Mammary epithelial cell (primary cell): ENCODE measurements at regions of chr9 and their contacts with region 1.

Region 1: GRCh38 chr9:78490231-78490630 is 193.3 kb downstream of the PSAT1 start:
- DNase-seq: no peak
- H3K4me3 ChIP-seq: no peak overlapping the region
- H3K27ac ChIP-seq: no peak overlapping the region
- H3K4me1 ChIP-seq: no peaks in the 10 kb centered on the region
- H3K27me3 ChIP-seq: no peaks in the 10 kb centered on the region
- CTCF ChIP-seq: no peak

Region 2: DNA sequence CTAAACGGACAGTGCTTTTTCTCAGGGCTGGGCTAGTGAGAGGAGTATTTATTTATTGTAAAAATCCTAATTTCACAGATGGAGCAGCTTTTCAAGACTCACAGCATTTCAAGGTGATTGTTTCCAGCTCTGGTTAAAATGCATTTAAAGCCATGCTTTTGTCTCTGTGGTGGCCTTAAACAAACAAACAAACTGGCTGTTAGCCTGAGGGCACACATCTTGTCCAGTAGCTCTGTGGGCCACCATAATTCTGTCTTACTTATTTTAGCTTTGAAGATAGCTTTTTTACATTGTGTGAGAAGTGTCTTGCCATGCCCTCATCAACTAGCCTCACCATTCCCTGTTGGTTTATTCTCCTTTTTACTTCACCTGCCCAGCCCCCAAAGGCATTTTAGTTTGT is 24.9 kb after region 1 on chr9:
- CTCF ChIA-PET with region 1: no interaction called
- dilution Hi-C with region 1: no loop called
- in situ Hi-C with region 1: no loop called
- intact Hi-C with region 1: no loop called
- DNase-seq: no peak
- H3K4me3 ChIP-seq: no peak overlapping the region
- H3K27ac ChIP-seq: no peak overlapping the region
- H3K4me1 ChIP-seq: no peaks in the 10 kb centered on the region
- H3K27me3 ChIP-seq: no peaks in the 10 kb centered on the region
- CTCF ChIP-seq: no peak

Region 3: GRCh38 chr9:78559449-78559885 is 69.2 kb after region 1 on chr9:
- CTCF ChIA-PET with region 1: interaction called, 18 read pairs
- dilution Hi-C with region 1: no loop called
- in situ Hi-C with region 1: no loop called
- intact Hi-C with region 1: no loop called
- DNase-seq: no peak
- H3K4me3 ChIP-seq: no peak overlapping the region
- H3K27ac ChIP-seq: no peak overlapping the region
- H3K4me1 ChIP-seq: no peaks in the 10 kb centered on the region
- H3K27me3 ChIP-seq: no peaks in the 10 kb centered on the region
- CTCF ChIP-seq: no peak